Right ventricle myocardium superior (tissue), 1 donor: ENCODE measurements at regions of chr5 and their contacts with region 1.

Region 1: DNA sequence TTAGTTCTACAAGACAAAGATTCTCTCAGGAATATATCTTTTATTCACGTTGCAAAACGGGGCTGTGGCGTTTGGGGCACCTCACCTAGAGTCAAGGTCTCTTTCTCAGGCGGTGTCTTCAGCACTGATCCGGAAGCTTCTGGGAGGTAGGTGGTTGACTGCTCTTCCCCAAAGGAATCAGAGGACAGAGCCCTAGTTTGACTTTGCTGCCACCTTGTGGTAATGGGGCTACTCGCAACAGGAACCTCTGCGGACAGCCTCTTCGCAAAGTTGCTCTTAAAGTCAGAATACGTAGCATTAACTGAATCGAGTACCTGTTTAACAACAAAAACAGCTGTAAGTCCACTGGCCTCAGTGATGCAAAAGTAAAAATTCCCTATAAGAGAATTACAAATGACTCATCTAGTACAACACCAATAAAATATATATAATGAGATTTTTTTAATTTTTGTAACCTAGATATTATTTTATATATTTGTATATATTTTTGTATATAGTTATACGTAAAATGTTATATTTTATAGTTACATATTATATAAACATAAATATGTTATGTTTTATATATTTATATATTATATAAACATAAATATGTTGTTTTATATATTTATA is 13.3 kb upstream of the GPX8 start:
- DNase-seq: peak; percentile 68
- ATAC-seq: peak; percentile 90

Region 2: GRCh38 chr5:54905943-54906537 is 240.6 kb before region 1 on chr5:
- intact Hi-C with region 1: loop called (anchors 2 kb)
- DNase-seq: peak; percentile 64
- ATAC-seq: peak; percentile 45

Region 3: GRCh38 chr5:54944364-54944763 is 202.3 kb before region 1 on chr5:
- intact Hi-C with region 1: loop called (anchors 10 kb)
- DNase-seq: no peak
- ATAC-seq: no peak

Region 4: GRCh38 chr5:55254802-55255201 is 108.2 kb after region 1 on chr5:
- intact Hi-C with region 1: no loop called
- DNase-seq: no peak
- ATAC-seq: no peak

Region 5: GRCh38 chr5:55278778-55279177 is 132.1 kb after region 1 on chr5:
- intact Hi-C with region 1: no loop called
- DNase-seq: no peak
- ATAC-seq: no peak